Activated naive CD4-positive, alpha-beta T cell treated with anti-CD3 and anti-CD28 coated beads for 36 hours (primary cell): ENCODE measurements at regions of chr9 and their contacts with region 1.

Region 1: GRCh38 chr9:93108291-93109041 is 12.4 kb downstream of the CARD19 start:
- DNase-seq: peak; percentile 80
- H3K4me3 Mint-ChIP-seq: no peak overlapping the region
- H3K27ac Mint-ChIP-seq: peak overlapping the region; percentile 76
- H3K4me1 Mint-ChIP-seq: peaks cover 55% of the 10 kb centered on the region
- H3K27me3 Mint-ChIP-seq: no peaks in the 10 kb centered on the region

Region 2: DNA sequence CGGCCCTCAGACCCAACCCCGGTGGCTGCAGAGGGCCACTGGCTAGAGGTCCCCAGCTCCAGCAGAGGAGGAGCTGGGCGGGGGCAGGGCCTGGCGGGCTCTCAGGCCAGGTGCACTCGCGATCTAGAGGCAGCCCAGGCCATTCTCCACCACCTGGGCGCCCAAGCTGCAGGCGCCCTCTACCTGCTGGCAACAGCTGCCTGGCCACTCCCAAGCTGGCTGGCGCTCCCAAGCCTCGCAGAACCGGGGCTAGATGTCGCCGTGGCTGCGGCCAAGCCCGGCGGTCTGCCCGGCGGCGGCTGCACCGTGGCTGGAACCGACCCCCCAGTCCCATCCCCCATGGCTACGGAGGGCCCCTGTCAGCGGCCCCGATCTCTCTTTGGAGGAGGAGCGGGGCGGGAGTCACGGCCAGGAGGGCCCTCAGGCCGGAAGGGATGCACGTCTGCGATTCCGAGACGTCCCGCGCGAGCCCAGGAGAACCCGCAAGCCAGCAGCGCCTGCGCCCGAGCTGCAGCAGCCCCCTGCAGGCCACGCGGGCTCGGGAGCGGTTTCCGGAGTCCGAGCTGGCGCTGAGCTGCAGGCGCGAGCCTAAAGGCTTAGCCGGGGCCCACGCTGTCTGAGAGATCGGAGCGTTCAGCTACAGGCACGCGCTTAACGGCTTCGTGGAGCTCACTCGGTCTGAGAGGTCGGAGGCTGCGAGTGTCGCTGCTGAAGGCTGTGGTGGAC is 299.6 kb before region 1 on chr9:
- CTCF ChIA-PET with region 1: no interaction called
- intact Hi-C with region 1: loop called (anchors 5 kb)
- DNase-seq: peak; percentile 72
- H3K4me3 Mint-ChIP-seq: peak overlapping the region; percentile 81
- H3K27ac Mint-ChIP-seq: no peak overlapping the region
- H3K4me1 Mint-ChIP-seq: peaks cover 9% of the 10 kb centered on the region
- H3K27me3 Mint-ChIP-seq: peaks cover 44% of the 10 kb centered on the region

Region 3: GRCh38 chr9:93028448-93029006 is 79.9 kb before region 1 on chr9:
- CTCF ChIA-PET with region 1: interaction called, 20 read pairs
- intact Hi-C with region 1: no loop called
- DNase-seq: peak; percentile 90
- H3K4me3 Mint-ChIP-seq: peak overlapping the region; percentile 55
- H3K27ac Mint-ChIP-seq: peak overlapping the region; percentile 97
- H3K4me1 Mint-ChIP-seq: peaks cover 87% of the 10 kb centered on the region
- H3K27me3 Mint-ChIP-seq: no peaks in the 10 kb centered on the region

Region 4: GRCh38 chr9:93143830-93144530 is 35.5 kb after region 1 on chr9:
- CTCF ChIA-PET with region 1: interaction called, 7 read pairs
- intact Hi-C with region 1: loop called (anchors 2 kb)
- DNase-seq: peak; percentile 67
- H3K4me3 Mint-ChIP-seq: no peak overlapping the region
- H3K27ac Mint-ChIP-seq: peak overlapping the region; percentile 79
- H3K4me1 Mint-ChIP-seq: peaks cover 68% of the 10 kb centered on the region
- H3K27me3 Mint-ChIP-seq: no peaks in the 10 kb centered on the region

Region 5: DNA sequence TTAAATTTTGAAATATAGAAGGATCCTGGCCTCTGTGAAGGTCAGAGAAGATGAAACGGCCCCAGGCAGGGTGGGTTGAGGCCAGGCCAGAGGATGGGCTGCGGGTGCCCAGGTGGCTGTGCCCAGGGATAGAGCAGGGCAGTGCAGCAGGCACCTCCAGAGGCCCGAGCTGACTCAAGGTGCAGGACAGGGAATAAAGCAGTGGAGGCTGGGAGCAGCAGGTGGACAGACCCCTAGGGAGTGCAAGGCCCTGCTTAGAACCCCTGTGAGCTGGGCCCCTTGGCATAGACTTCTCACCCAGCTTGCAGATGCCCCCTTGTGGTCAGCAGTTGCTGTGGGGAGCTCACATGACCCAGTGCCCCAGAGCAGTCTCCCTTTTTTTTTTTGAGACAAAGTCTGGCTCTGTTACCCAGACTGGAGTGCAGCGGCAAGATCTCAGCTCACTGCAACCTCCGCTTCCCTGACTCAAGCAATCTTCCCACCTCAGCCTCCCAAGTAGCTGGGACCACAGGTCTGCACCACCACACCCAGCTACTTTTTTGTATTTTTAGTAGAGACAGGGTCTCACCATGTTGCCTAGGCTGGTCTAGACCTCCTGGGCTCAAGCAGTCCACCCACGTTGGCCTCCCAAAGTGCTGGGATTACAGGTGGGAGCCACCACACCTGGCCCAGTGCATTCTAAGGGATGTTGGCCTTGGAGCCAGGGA is 194.2 kb after region 1 on chr9:
- CTCF ChIA-PET with region 1: interaction called, 9 read pairs
- intact Hi-C with region 1: loop called (anchors 1 kb)
- DNase-seq: peak; percentile 73
- H3K4me3 Mint-ChIP-seq: no peak overlapping the region
- H3K27ac Mint-ChIP-seq: no peak overlapping the region
- H3K4me1 Mint-ChIP-seq: no peaks in the 10 kb centered on the region
- H3K27me3 Mint-ChIP-seq: no peaks in the 10 kb centered on the region

Region 6: DNA sequence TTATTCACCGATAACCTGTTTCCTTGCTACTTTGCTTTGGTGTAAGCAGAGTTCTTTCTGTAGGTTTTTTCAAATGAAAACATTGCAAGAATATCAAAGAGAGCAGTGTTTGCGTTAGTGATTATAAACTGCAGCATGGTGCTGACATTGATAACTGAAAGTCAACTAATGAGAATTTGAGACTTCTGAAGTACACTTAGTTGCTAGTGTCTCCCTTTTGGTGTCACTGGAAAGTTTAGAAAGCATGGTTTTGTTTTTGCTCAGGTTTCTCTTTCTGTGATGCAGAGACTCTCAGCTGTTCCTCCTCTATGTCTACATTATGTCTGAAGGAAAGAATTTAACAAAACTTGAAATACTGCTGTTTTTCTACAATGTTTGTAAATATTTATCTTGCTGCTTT is 1070.5 kb after region 1 on chr9:
- CTCF ChIA-PET with region 1: no interaction called
- intact Hi-C with region 1: no loop called
- DNase-seq: no peak
- H3K4me3 Mint-ChIP-seq: no peak overlapping the region
- H3K27ac Mint-ChIP-seq: peak overlapping the region; percentile 14
- H3K4me1 Mint-ChIP-seq: peaks cover 67% of the 10 kb centered on the region
- H3K27me3 Mint-ChIP-seq: no peaks in the 10 kb centered on the region